ENCODE measurements at regions of chr1 and their contacts with region 1.

Region 1: DNA sequence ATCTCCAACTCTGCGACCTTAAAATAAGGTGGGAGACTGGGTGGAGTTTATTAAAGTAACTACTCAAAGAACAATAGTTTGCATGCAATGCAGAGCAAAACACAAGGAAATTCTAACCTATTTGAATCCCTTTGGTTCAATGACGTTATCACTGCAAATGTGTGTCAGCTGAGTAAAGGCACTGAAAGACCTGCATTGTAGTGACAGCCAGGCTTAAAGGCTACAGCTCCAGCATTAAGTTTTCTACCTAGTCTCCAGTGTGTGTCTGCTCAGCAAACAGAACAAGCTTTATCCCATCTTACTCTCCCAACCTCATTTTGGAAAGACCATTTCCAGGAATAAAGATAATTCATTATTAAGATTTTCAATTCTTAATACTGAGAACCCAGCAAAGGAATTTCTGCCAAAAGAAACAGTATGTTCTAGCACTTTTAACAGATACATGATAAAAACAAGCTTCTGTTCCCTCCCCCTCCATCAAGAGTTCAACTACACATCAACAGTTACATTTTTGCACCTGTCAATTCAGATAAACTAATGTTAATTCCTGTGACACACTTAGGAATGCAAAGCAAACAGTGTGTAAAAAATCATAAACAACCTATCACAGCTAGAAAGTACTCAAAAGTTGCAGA is 14.2 kb downstream of the PTP4A2 start:
- DNase-seq: no peak
- H3K4me3 ChIP-seq: no peak overlapping the region
- H3K27ac ChIP-seq: no peak overlapping the region
- H3K4me1 ChIP-seq: no peaks in the 10 kb centered on the region
- H3K27me3 ChIP-seq: no peaks in the 10 kb centered on the region
- CTCF ChIP-seq: no peak

Region 2: GRCh38 chr1:31815752-31816500 is 108.1 kb before region 1 on chr1 and contains the start of gene SPOCD1:
- CTCF ChIA-PET with region 1: no interaction called
- dilution Hi-C with region 1: no loop called
- in situ Hi-C with region 1: no loop called
- intact Hi-C with region 1: no loop called
- DNase-seq: peak; percentile 58
- H3K4me3 ChIP-seq: no peak within 1 kb of the TSS
- H3K27ac ChIP-seq: no peak within 1 kb of the TSS
- H3K4me1 ChIP-seq: no peaks in the 10 kb centered on the region
- H3K27me3 ChIP-seq: no peaks in the 10 kb centered on the region
- CTCF ChIP-seq: peak; percentile 75 to 77
- total RNA-seq, gene SPOCD1: 10.3 to 14.3 TPM

Region 3: DNA sequence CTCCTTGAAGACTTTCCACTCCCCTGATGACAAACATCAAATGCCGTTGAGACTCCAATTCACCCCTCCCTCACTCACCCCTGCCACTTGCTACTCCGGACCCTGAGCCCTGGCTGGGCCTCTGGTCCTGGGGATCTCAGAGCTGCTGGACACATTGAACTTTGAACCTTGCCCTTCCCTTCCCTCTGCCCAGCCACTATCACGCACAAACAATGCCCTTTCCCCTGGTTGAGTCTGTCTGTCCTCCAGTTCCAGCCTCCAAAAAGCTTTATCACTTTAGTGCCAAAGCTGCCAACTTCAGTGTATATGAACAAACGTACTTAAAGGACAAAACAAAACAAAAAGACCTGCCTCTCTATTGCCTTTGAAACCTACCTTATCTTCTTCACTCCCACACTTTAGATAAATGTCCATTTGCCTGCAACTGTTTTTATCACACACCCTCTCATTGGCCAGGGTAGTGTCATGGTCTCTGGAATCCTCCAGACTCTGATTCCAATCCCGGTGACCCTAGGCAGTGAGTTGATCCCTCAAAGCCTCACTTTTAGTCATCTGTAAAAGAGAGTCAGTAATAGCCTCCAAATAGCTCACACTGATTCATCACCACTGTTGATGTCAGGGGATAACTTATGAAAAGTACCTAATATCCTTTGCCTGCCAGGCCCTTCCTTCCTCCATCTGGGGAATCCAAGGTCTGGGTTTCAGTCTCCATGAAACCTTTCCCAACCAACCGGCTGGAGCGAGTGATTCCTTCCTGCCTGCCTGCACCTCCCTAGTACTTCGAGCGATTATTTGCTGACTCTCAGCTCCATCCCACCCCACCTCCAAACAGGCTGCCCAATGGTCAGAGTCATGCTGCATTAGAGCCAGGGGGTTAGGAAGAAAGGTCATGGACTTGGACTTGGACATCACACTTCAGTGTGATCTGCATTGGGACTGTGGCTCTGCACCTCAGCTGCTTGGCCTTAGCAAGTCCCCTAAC is 92.3 kb before region 1 on chr1:
- CTCF ChIA-PET with region 1: no interaction called
- dilution Hi-C with region 1: loop called (anchors 5 kb)
- in situ Hi-C with region 1: no loop called
- intact Hi-C with region 1: no loop called
- DNase-seq: peak; percentile 54
- H3K4me3 ChIP-seq: no peak overlapping the region
- H3K27ac ChIP-seq: no peak overlapping the region
- H3K4me1 ChIP-seq: no peaks in the 10 kb centered on the region
- H3K27me3 ChIP-seq: peaks cover 6% of the 10 kb centered on the region
- CTCF ChIP-seq: no peak

Region 4: DNA sequence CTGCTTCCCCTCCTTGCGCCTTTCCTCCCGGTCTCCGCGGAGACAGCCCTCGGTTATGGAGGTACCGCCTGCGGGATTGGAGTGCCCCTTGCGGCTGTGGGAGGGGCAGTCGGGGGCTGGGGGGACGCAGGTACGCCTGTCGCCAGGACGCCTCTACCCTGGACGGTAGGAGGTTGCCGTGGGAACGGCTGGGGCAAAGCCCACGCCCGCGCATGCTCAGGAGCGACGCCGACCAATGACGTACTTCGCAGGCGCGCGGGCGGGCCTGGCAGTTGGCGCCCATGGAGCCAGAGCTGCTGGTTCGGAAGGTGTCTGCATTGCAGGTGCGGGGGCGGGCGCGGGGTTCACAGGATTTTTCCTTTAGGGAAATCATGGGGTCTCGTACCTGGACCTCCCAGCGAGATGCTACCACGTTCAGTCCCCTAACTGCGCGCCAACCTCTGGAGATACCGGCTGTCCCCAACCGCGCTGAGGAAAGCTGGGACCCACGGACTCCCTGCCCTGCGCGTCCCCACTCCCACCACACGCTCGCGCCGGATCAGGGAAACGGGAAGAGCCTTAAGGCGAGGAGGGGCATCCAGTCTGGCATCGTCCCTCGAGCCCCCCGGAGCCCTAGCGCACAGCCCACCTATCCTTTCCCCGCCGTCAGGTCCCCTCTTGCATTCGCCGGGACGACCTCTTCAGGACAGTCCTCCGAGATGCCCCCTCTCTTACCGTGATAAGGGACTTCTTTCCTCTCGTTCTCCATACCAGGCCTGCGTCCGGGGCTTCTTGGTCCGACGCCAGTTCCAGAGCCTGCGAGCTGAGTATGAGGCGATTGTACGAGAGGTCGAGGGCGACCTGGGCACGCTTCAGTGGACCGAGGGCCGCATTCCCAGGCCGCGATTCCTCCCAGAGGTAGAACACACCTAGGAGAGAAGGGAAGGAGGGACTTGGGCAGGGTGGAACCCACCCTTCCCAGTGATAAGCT is 281.7 kb after region 1 on chr1 and contains the start of gene IQCC:
- CTCF ChIA-PET with region 1: no interaction called
- dilution Hi-C with region 1: no loop called
- in situ Hi-C with region 1: no loop called
- intact Hi-C with region 1: no loop called
- DNase-seq: peak; percentile 79
- H3K4me3 ChIP-seq: peak within 1 kb of the TSS; percentile 61 to 92 (median 79)
- H3K27ac ChIP-seq: peak within 1 kb of the TSS; percentile 68
- H3K4me1 ChIP-seq: peaks cover 13% of the 10 kb centered on the region
- H3K27me3 ChIP-seq: no peaks in the 10 kb centered on the region
- CTCF ChIP-seq: no peak
- total RNA-seq, gene IQCC: 2.2 to 3.9 TPM

Measured in mammary epithelial cell (primary cell).